ENCODE measurements at regions of chr18 and their contacts with region 1.

Region 1: GRCh38 chr18:61992285-61992684 is 99.5 kb upstream of the RNF152 start:
- DNase-seq: no peak
- ATAC-seq: no peak
- H3K4me3 ChIP-seq: no peak overlapping the region
- H3K27ac ChIP-seq: peak overlapping the region; percentile 17 to 85
- H3K4me1 ChIP-seq: peaks cover 5 to 10% of the 10 kb centered on the region in 2 donors
- H3K27me3 ChIP-seq: no peaks in the 10 kb centered on the region

Region 2: GRCh38 chr18:61949946-61950345 is 42.3 kb before region 1 on chr18:
- intact Hi-C with region 1: loop called in 1 of 2 experiments (anchors 5 kb)
- DNase-seq: peak in 1 of 2 donors; percentile 63
- ATAC-seq: peak; percentile 64
- H3K4me3 ChIP-seq: no peak overlapping the region
- H3K27ac ChIP-seq: peak overlapping the region in 1 of 2 donors; percentile 43
- H3K4me1 ChIP-seq: peaks cover 2 to 9% of the 10 kb centered on the region in 2 donors
- H3K27me3 ChIP-seq: no peaks in the 10 kb centered on the region

Measured in aorta (tissue), 5 donors.